ENCODE measurements at regions of chr18 and their contacts with region 1.

Region 1: DNA sequence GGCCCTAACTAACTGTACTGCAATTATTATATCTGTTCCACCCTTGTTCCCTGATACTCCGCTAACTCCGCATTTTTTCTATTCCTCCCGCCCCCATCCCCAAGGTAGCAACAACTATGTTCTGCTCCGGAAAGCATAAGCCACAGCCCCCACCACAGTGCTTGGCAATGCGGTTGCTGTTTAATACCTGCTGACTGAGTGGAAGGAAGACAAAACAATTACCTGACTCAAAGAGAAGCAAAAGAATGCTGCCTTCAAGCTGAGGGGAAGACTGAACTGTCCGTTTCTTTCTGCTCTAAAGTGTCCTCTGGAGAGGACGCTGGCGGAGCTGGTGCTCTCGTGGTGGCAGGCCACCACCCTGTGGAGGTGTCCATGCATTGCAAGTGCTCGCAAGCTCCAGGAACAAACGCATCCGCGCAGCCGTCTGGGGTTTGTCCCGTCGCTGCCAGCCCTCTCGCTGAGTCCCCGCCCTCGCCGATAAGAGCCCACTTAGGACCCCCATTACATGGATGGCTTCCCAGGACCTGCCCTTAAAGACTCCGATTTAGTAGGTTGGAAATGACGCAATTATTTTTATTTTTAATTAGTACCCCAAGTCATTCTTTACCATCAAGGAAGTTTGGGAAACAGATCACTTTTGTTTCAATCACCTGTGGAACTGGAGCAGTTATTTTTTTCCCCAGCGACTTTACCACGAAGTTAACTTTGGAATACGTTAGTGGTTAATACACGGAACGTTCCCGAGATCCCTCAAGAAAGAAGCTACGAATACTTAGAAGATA is 1.6 kb upstream of the MYL12A start:
- DNase-seq: peak; percentile 73 to 97 (median 79)
- ATAC-seq: peak; percentile 76
- H3K4me3 ChIP-seq: peak overlapping the region; percentile 92
- H3K27ac ChIP-seq: peak overlapping the region; percentile 100
- H3K4me1 ChIP-seq: peaks cover 3 to 11% of the 10 kb centered on the region in 2 experiments; a peak in 3 of 5 replicates
- H3K27me3 ChIP-seq: no peaks in the 10 kb centered on the region
- CTCF ChIP-seq: peak; percentile 96 to 99 (median 99)
- EP300 ChIP-seq: peak; percentile 60; the same call in 1 of the 2 replicates
- POLR2A ChIP-seq: no peak
- RAD21 ChIP-seq: peak; percentile 99 to 100

Region 2: DNA sequence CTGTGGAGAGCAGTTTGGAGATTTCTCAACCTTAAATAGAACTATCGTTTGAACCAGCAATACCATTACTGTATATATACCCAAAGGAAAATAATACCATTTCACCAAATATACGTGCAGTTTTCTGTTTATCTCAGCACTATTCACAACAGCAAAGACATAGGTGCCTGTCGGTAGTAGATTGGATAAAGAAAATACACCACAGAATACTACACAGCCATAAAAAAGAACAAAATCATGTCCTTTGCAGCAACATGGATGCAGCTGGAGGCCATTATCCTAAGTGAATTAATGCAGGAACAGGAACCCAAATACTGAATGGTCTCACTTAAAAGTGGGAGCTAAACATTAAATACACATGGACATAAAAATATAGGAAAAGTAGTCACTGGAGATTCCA is 509.2 kb before region 1 on chr18:
- CTCF ChIA-PET with region 1: no interaction called
- POLR2A ChIA-PET with region 1: no interaction called
- in situ Hi-C with region 1: no loop called
- intact Hi-C with region 1: no loop called
- DNase-seq: no peak
- ATAC-seq: peak; percentile 38
- H3K4me3 ChIP-seq: no peak overlapping the region
- H3K27ac ChIP-seq: no peak overlapping the region
- H3K4me1 ChIP-seq: no peaks in the 10 kb centered on the region
- H3K27me3 ChIP-seq: no peaks in the 10 kb centered on the region
- CTCF ChIP-seq: no peak
- EP300 ChIP-seq: no peak
- POLR2A ChIP-seq: 0 out of 2 replicates have a peak, but pooled peaks have one; percentile 14
- RAD21 ChIP-seq: no peak

Region 3: DNA sequence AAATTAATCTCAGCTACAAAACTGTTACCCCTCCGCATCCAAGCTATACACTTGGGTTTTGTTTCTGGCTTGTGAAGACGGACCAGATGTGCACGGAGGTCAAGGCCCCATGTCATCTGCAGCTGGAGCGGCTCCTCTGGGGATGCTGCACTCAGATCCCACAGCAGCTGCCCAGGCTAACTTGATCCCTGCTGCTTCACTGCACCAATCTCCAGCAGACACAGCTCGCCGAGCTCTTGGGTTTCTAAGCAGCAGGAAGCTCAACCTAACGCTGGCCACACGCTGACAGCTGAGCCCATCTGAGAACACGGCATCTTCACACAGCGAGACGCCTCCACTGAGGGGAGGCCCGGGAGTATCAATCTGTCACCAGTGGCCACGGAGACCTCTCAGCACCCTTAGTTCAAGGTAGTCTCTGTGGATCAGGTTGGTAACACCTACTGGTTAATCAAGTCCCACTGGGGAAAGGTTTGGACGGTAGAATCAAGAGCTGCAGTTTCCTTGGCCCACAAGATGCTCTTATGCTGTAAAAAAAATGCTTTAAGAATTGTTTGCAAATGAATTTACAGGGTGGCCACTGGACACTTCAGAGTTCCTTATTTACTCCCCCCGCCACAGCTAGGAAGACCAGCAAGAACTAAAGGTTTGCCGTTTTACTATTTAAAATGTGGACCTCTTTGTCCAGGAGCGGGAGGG is 331.7 kb before region 1 on chr18:
- CTCF ChIA-PET with region 1: no interaction called
- POLR2A ChIA-PET with region 1: interaction called, 15 read pairs
- in situ Hi-C with region 1: no loop called
- intact Hi-C with region 1: no loop called
- DNase-seq: no peak
- ATAC-seq: no peak
- H3K4me3 ChIP-seq: no peak overlapping the region
- H3K27ac ChIP-seq: no peak overlapping the region
- H3K4me1 ChIP-seq: peaks cover 0 to 11% of the 10 kb centered on the region in 2 experiments; a peak in 1 of 5 replicates
- H3K27me3 ChIP-seq: 0 out of 5 replicates have a peak, but pooled peaks cover 0 to 2% of the 10 kb centered on the region in 2 experiments
- CTCF ChIP-seq: no peak
- EP300 ChIP-seq: no peak
- POLR2A ChIP-seq: no peak
- RAD21 ChIP-seq: no peak

Region 4: GRCh38 chr18:2948038-2948437 is 298.0 kb before region 1 on chr18:
- CTCF ChIA-PET with region 1: interaction called, 11 read pairs
- POLR2A ChIA-PET with region 1: interaction called, 10 read pairs
- in situ Hi-C with region 1: loop called (anchors 5 kb)
- intact Hi-C with region 1: no loop called
- DNase-seq: peak; percentile 18 to 40 (median 32)
- ATAC-seq: peak; percentile 59; the same call in 2 of the 3 replicates
- H3K4me3 ChIP-seq: no peak overlapping the region
- H3K27ac ChIP-seq: no peak overlapping the region
- H3K4me1 ChIP-seq: no peaks in the 10 kb centered on the region
- H3K27me3 ChIP-seq: no peaks in the 10 kb centered on the region
- CTCF ChIP-seq: peak in 2 of 3 experiments; percentile 37 to 51; a peak in 2 of 6 replicates
- EP300 ChIP-seq: no peak
- POLR2A ChIP-seq: no peak
- RAD21 ChIP-seq: peak; percentile 25 to 37; a peak in 1 of 4 replicates

Region 5: GRCh38 chr18:3062798-3063680 is 183.0 kb before region 1 on chr18:
- CTCF ChIA-PET with region 1: no interaction called
- POLR2A ChIA-PET with region 1: no interaction called
- in situ Hi-C with region 1: no loop called
- intact Hi-C with region 1: loop called (anchors 2 kb)
- DNase-seq: peak; percentile 34 to 80 (median 56)
- ATAC-seq: peak; percentile 94
- H3K4me3 ChIP-seq: no peak overlapping the region
- H3K27ac ChIP-seq: no peak overlapping the region
- H3K4me1 ChIP-seq: peaks cover 4 to 5% of the 10 kb centered on the region in 2 experiments; a peak in 4 of 5 replicates
- H3K27me3 ChIP-seq: no peaks in the 10 kb centered on the region
- CTCF ChIP-seq: peak; percentile 83 to 93 (median 86)
- EP300 ChIP-seq: no peak
- POLR2A ChIP-seq: no peak
- RAD21 ChIP-seq: peak; percentile 74 to 90

Region 6: GRCh38 chr18:3151399-3152264 is 94.4 kb before region 1 on chr18:
- CTCF ChIA-PET with region 1: interaction called, 4 read pairs
- POLR2A ChIA-PET with region 1: interaction called, 5 read pairs
- in situ Hi-C with region 1: no loop called
- intact Hi-C with region 1: loop called (anchors 2 kb)
- DNase-seq: peak; percentile 52 to 65 (median 62)
- ATAC-seq: peak; percentile 36; the same call in 1 of the 3 replicates
- H3K4me3 ChIP-seq: no peak overlapping the region
- H3K27ac ChIP-seq: no peak overlapping the region
- H3K4me1 ChIP-seq: peaks cover 4 to 5% of the 10 kb centered on the region in 2 experiments; a peak in 2 of 5 replicates
- H3K27me3 ChIP-seq: no peaks in the 10 kb centered on the region
- CTCF ChIP-seq: peak; percentile 70 to 87 (median 70); a peak in 5 of 6 replicates
- EP300 ChIP-seq: no peak
- POLR2A ChIP-seq: no peak
- RAD21 ChIP-seq: peak; percentile 64 to 82

Region 7: GRCh38 chr18:3186678-3187658 is 59.1 kb before region 1 on chr18:
- CTCF ChIA-PET with region 1: no interaction called
- POLR2A ChIA-PET with region 1: interaction called, 6 read pairs
- in situ Hi-C with region 1: no loop called
- intact Hi-C with region 1: loop called (anchors 1 kb)
- DNase-seq: peak; percentile 36 to 64 (median 52)
- ATAC-seq: peak; percentile 94
- H3K4me3 ChIP-seq: no peak overlapping the region
- H3K27ac ChIP-seq: no peak overlapping the region
- H3K4me1 ChIP-seq: 0 out of 5 replicates have a peak, but pooled peaks cover 0 to 3% of the 10 kb centered on the region in 2 experiments
- H3K27me3 ChIP-seq: no peaks in the 10 kb centered on the region
- CTCF ChIP-seq: peak; percentile 46 to 56 (median 54); a peak in 5 of 6 replicates
- EP300 ChIP-seq: no peak
- POLR2A ChIP-seq: no peak
- RAD21 ChIP-seq: peak; percentile 36 to 70

Region 8: GRCh38 chr18:3261371-3262246 is 15.6 kb after region 1 on chr18 and contains the start of gene MYL12B:
- CTCF ChIA-PET with region 1: no interaction called
- POLR2A ChIA-PET with region 1: interaction called, 33 read pairs
- in situ Hi-C with region 1: no loop called
- intact Hi-C with region 1: loop called (anchors 2 kb)
- DNase-seq: peak; percentile 79 to 92 (median 83)
- ATAC-seq: peak; percentile 85
- H3K4me3 ChIP-seq: peak within 1 kb of the TSS; percentile 84
- H3K27ac ChIP-seq: peak within 1 kb of the TSS; percentile 97
- H3K4me1 ChIP-seq: peaks cover 25 to 42% of the 10 kb centered on the region in 2 experiments
- H3K27me3 ChIP-seq: no peaks in the 10 kb centered on the region
- CTCF ChIP-seq: peak in 1 of 3 experiments; percentile 19; a peak in 1 of 6 replicates
- EP300 ChIP-seq: no peak
- POLR2A ChIP-seq: peak; percentile 85
- RAD21 ChIP-seq: no peak
- polyA plus RNA-seq, gene MYL12B: 913 to 995 TPM

Measured in K562 (cell line).